T-cell (primary cell): ENCODE measurements at regions of chr11 and their contacts with region 1.

Region 1: GRCh38 chr11:62645956-62646824 is at the start of gene GANAB:
- DNase-seq: peak; percentile 96 to 100 (median 99)
- ATAC-seq: peak; percentile 98 to 99 (median 98)
- H3K4me3 ChIP-seq: peak within 1 kb of the TSS; percentile 95 to 100
- H3K4me3 Mint-ChIP-seq: peak within 1 kb of the TSS; percentile 95 to 98 (median 97)
- H3K27ac ChIP-seq: peak within 1 kb of the TSS; percentile 94
- H3K27ac Mint-ChIP-seq: peak within 1 kb of the TSS; percentile 93 to 96
- H3K4me1 ChIP-seq: peaks cover 11 to 47% of the 10 kb centered on the region in 2 experiments
- H3K4me1 Mint-ChIP-seq: peaks cover 27 to 39% (median 36%) of the 10 kb centered on the region in 3 donors
- H3K27me3 ChIP-seq: no peaks in the 10 kb centered on the region
- H3K27me3 Mint-ChIP-seq: no peaks in the 10 kb centered on the region
- total RNA-seq, gene GANAB: 216 to 278 (median 257) TPM

Region 2: GRCh38 chr11:62461740-62462507 is 184.3 kb before region 1 on chr11:
- CTCF ChIA-PET with region 1: no interaction called
- POLR2A ChIA-PET with region 1: no interaction called
- DNase-seq: no peak
- ATAC-seq: no peak
- H3K4me3 ChIP-seq: no peak overlapping the region
- H3K4me3 Mint-ChIP-seq: no peak overlapping the region
- H3K27ac ChIP-seq: no peak overlapping the region
- H3K27ac Mint-ChIP-seq: no peak overlapping the region
- H3K4me1 ChIP-seq: peaks cover 0 to 4% of the 10 kb centered on the region in 2 experiments
- H3K4me1 Mint-ChIP-seq: peaks cover 0 to 5% (median 0%) of the 10 kb centered on the region in 3 donors
- H3K27me3 ChIP-seq: no peaks in the 10 kb centered on the region
- H3K27me3 Mint-ChIP-seq: no peaks in the 10 kb centered on the region

Region 3: DNA sequence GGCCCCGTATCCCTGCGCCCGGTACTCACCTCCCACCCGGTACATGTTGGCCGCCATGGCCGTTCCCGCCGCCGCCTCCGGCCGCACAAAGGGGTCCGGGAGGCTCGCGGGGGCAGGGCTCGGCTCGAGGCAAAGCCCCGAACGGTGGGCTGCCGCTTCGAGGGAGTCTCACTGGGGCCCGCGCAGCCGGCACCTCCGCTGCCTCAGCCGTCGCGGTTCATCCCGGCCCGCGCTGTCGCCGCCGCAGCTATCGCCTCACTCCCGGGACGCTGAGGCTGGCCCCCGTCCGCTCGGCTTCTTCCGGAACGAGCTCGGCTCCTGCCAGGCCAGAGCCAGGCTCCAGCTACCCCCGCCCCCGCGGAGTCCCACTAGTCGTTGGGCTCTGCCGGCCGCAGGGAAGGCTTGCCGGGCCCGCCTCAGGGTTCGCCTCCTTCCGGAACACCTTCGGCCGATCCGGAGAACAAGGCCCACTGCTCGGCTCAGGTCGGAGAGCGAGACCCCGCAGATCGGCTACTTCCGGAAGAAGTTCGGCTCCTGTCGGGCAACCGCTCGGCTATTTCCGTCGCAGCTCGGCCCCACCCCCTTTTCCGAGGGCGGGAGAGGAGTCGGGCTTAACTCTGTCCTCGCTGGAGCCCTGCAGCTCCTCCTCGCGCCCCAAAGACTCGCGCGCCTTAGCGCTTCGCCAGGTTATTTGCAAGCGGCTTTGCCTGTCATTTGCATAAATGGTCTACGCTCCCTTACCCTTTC is 44.6 kb before region 1 on chr11 and contains the start of gene MTA2:
- CTCF ChIA-PET with region 1: no interaction called
- POLR2A ChIA-PET with region 1: interaction called, 5 to 11 read pairs
- DNase-seq: peak; percentile 91 to 100 (median 97)
- ATAC-seq: peak; percentile 80 to 83 (median 82)
- H3K4me3 ChIP-seq: peak within 1 kb of the TSS; percentile 95 to 98
- H3K4me3 Mint-ChIP-seq: peak within 1 kb of the TSS; percentile 86 to 97 (median 92)
- H3K27ac ChIP-seq: peak within 1 kb of the TSS; percentile 85
- H3K27ac Mint-ChIP-seq: peak within 1 kb of the TSS; percentile 95 to 100
- H3K4me1 ChIP-seq: peaks cover 14 to 52% of the 10 kb centered on the region in 2 experiments
- H3K4me1 Mint-ChIP-seq: peaks cover 55 to 59% (median 55%) of the 10 kb centered on the region in 3 donors
- H3K27me3 ChIP-seq: no peaks in the 10 kb centered on the region
- H3K27me3 Mint-ChIP-seq: no peaks in the 10 kb centered on the region
- total RNA-seq, gene MTA2: 151 to 185 (median 184) TPM

Region 4: DNA sequence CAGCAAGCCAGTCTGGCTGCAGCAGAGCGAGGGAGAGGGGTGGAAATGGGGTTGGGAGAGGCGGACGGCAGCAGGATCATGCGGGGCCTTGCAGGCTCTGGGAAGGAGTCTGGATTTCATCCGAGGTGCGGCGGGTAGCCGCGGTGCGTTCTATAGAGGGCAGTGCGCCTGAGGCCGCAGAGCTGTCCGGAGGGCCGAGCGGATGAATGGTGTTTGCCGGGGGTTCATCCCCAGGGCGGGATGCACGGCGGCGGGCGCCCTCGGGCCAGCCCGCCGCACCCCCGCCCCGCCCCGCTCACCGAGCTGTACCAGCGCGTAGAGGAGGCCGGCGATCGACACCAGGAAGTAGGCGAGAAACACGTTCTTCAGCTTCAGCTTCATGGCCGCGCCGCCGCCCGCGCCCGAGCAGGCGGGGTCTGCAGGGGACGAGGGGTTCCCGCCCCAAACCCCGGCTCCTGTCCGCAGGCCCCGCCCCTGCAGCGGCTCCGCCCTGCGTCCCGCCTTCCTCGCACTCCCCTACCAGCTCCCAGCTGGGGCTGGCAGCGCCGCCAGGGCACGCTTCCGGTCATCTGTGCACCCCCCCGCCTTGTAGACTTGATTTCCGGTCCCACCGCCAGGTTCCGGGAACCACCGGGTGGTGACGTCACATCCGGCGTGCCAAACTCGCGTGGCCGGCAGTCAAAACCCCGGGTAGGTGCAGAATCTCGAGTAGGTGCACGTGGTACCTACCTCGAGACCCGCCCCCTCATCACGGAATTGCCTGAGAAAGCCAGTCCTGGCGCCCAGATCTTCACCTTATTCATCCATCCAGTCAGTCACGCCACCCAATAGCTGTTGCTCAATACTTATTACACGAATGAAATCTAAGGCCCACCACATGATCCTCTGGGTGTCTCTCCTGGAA is 24.4 kb before region 1 on chr11 and contains the start of gene B3GAT3:
- CTCF ChIA-PET with region 1: interaction called in 1 of 2 experiments, 17 read pairs
- POLR2A ChIA-PET with region 1: interaction called in 1 of 2 experiments, 4 read pairs
- DNase-seq: peak; percentile 89 to 99 (median 95)
- ATAC-seq: peak; percentile 79 to 84 (median 82)
- H3K4me3 ChIP-seq: peak within 1 kb of the TSS; percentile 83 to 95
- H3K4me3 Mint-ChIP-seq: peak within 1 kb of the TSS; percentile 90 to 99 (median 94)
- H3K27ac ChIP-seq: peak within 1 kb of the TSS; percentile 85
- H3K27ac Mint-ChIP-seq: peak within 1 kb of the TSS; percentile 96 to 97
- H3K4me1 ChIP-seq: peaks cover 15 to 27% of the 10 kb centered on the region in 2 experiments
- H3K4me1 Mint-ChIP-seq: peaks cover 17 to 27% (median 24%) of the 10 kb centered on the region in 3 donors
- H3K27me3 ChIP-seq: no peaks in the 10 kb centered on the region
- H3K27me3 Mint-ChIP-seq: no peaks in the 10 kb centered on the region
- total RNA-seq, gene B3GAT3: 59.0 to 94.5 (median 90.5) TPM

Region 5: DNA sequence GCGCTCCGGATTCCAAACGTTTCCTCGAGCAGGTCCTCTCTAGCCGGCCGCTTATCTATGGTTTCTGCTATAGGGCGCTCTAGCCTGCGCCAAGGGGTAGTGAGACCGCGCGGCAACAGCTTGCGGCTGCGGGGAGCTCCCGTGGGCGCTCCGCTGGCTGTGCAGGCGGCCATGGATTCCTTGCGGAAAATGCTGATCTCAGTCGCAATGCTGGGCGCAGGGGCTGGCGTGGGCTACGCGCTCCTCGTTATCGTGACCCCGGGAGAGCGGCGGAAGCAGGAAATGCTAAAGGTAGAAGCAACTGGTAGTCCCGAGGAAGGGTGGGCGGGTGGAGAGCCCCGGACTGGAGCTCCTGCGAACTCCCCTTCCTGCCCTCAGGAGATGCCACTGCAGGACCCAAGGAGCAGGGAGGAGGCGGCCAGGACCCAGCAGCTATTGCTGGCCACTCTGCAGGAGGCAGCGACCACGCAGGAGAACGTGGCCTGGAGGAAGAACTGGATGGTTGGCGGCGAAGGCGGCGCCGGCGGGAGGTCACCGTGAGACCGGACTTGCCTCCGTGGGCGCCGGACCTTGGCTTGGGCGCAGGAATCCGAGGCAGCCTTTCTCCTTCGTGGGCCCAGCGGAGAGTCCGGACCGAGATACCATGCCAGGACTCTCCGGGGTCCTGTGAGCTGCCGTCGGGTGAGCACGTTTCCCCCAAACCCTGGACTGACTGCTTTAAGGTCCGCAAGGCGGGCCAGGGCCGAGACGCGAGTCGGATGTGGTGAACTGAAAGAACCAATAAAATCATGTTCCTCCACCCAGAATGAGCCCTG is 25.6 kb after region 1 on chr11 and contains the starts of genes LBHD1 and UQCC3:
- CTCF ChIA-PET with region 1: no interaction called
- POLR2A ChIA-PET with region 1: interaction called, 6 to 11 read pairs
- DNase-seq: peak; percentile 32 to 81 (median 60)
- ATAC-seq: peak; percentile 72 to 80 (median 78)
- H3K4me3 ChIP-seq: peak within 1 kb of the TSS; percentile 82 to 96
- H3K4me3 Mint-ChIP-seq: peak within 1 kb of the TSS; percentile 98 to 99 (median 99)
- H3K27ac ChIP-seq: peak within 1 kb of the TSS; percentile 65
- H3K27ac Mint-ChIP-seq: peak within 1 kb of the TSS; percentile 98 to 99
- H3K4me1 ChIP-seq: peaks cover 7 to 45% of the 10 kb centered on the region in 2 experiments
- H3K4me1 Mint-ChIP-seq: peaks cover 57 to 62% (median 59%) of the 10 kb centered on the region in 3 donors
- H3K27me3 ChIP-seq: no peaks in the 10 kb centered on the region
- H3K27me3 Mint-ChIP-seq: no peaks in the 10 kb centered on the region
- total RNA-seq, gene LBHD1: 15.5 to 24.7 (median 20.7) TPM
- total RNA-seq, gene UQCC3: 2.7 to 9.3 (median 8.1) TPM

Region 6: DNA sequence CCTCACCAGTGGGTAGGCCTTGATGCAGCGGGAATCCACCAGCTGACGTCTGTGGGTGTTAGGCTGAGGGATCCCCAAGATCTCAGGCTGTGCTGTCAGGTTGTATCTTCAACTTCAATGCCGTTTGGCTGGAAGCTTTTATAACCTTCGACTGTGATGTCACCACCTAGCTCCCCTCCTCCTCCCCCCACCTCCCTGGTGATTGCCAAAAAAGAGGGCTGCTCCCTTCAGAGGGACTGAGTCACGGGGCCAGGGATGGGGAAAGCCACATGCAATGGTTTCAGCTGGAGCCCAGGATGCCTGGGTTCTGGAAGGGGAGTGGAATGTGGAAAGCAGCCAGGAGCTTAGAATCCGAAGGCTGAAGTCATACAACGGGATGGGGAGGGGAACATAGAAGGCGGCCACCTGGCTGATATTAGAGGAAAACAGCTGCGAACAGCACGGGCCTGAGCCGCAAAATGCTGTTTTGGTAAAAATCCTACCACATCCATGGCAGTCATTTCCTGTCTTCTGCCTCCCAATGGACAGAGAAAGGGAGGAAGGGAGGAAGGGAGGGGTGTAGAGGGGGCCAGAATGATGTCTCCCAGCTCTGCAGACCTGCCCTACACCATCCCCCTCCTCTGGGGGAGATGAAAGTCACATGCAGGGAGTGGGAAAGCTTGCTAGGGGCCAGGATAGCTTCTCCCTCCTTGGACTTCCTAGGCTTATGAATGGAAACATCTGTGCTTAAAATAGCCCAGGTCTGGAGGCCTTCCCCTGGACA is 43.4 kb after region 1 on chr11 and contains the start of gene LRRN4CL:
- CTCF ChIA-PET with region 1: no interaction called
- POLR2A ChIA-PET with region 1: no interaction called
- DNase-seq: no peak
- ATAC-seq: no peak
- H3K4me3 ChIP-seq: no peak within 1 kb of the TSS
- H3K4me3 Mint-ChIP-seq: no peak within 1 kb of the TSS
- H3K27ac ChIP-seq: no peak within 1 kb of the TSS
- H3K27ac Mint-ChIP-seq: no peak within 1 kb of the TSS
- H3K4me1 ChIP-seq: peaks cover 0 to 9% of the 10 kb centered on the region in 2 experiments
- H3K4me1 Mint-ChIP-seq: peaks cover under 1 to 3% (median under 1%) of the 10 kb centered on the region in 3 donors
- H3K27me3 ChIP-seq: peaks cover 2 to 17% of the 10 kb centered on the region in 2 experiments
- H3K27me3 Mint-ChIP-seq: peaks cover 5 to 9% of the 10 kb centered on the region in 2 donors
- total RNA-seq, gene LRRN4CL: 0.14 to 0.29 (median 0.19) TPM in 4 of 5 donors, not detected in the other